GM12878 (cell line): ENCODE measurements at regions of chr7 and their contacts with region 1.

Region 1: GRCh38 chr7:149261829-149262617 is at the start of gene ZNF783:
- DNase-seq: peak; percentile 32
- ATAC-seq: peak; percentile 96
- H3K4me3 ChIP-seq: peak within 1 kb of the TSS; percentile 83
- H3K27ac ChIP-seq: 0 out of 2 replicates have a peak within 1 kb of the TSS, but pooled peaks have one; percentile 6
- H3K4me1 ChIP-seq: peaks cover 6% of the 10 kb centered on the region
- H3K27me3 ChIP-seq: no peaks in the 10 kb centered on the region
- CTCF ChIP-seq: peak; percentile 67 to 90 (median 71); a peak in 5 of 6 replicates
- EP300 ChIP-seq: no peak
- POLR2A ChIP-seq: peak; percentile 79
- RAD21 ChIP-seq: no peak
- polyA plus RNA-seq, gene ZNF783: 2.0 to 2.8 TPM

Region 2: DNA sequence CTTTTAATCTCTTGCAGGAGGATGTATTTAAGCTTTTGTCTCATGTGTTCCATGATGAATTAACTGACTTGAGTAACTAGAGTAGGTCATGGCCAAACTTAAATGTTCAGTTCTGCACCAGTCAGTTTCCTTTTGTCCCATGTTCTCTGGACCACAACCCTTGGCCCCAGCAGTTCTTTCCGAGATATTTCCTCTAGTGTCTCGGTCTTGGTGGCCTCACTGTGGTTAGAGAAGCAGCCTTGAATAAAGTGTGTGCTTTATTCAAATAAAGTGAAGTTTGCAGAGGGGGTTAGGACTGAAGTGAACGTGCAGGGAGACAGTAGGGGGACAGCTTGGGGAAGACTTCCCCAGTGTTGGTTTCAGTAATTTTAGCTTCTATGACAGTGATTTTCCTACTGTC is 13.2 kb before region 1 on chr7:
- CTCF ChIA-PET with region 1: interaction called, 15 read pairs
- POLR2A ChIA-PET with region 1: interaction called, 4 read pairs
- RAD21 ChIA-PET with region 1: interaction called, 3 read pairs
- SMC1A ChIA-PET with region 1: interaction called, 3 read pairs
- in situ Hi-C with region 1: no loop called
- intact Hi-C with region 1: no loop called
- DNase-seq: no peak
- ATAC-seq: peak; percentile 32; the same call in 2 of the 3 replicates
- H3K4me3 ChIP-seq: 0 out of 2 replicates have a peak overlapping the region, but pooled peaks have one; percentile 3
- H3K27ac ChIP-seq: 0 out of 2 replicates have a peak overlapping the region, but pooled peaks have one; percentile 10
- H3K4me1 ChIP-seq: peaks cover 13% of the 10 kb centered on the region
- H3K27me3 ChIP-seq: no peaks in the 10 kb centered on the region
- CTCF ChIP-seq: no peak
- EP300 ChIP-seq: no peak
- POLR2A ChIP-seq: no peak
- RAD21 ChIP-seq: no peak

Region 3: GRCh38 chr7:149284850-149285626 is 23.0 kb after region 1 on chr7:
- CTCF ChIA-PET with region 1: interaction called, 23 read pairs
- POLR2A ChIA-PET with region 1: interaction called, 4 read pairs
- RAD21 ChIA-PET with region 1: interaction called, 12 read pairs
- SMC1A ChIA-PET with region 1: interaction called, 5 read pairs
- in situ Hi-C with region 1: no loop called
- intact Hi-C with region 1: loop called (anchors 2 kb)
- DNase-seq: peak; percentile 68
- ATAC-seq: peak; percentile 99
- H3K4me3 ChIP-seq: peak overlapping the region; percentile 64
- H3K27ac ChIP-seq: peak overlapping the region; percentile 38; the same call in 1 of the 2 replicates
- H3K4me1 ChIP-seq: peaks cover 12% of the 10 kb centered on the region
- H3K27me3 ChIP-seq: no peaks in the 10 kb centered on the region
- CTCF ChIP-seq: peak in 2 of 3 experiments; percentile 16 to 28; a peak in 2 of 6 replicates
- EP300 ChIP-seq: no peak
- POLR2A ChIP-seq: peak; percentile 82
- RAD21 ChIP-seq: no peak

Region 4: GRCh38 chr7:149624419-149625339 is 362.7 kb after region 1 on chr7:
- CTCF ChIA-PET with region 1: interaction called, 7 read pairs
- POLR2A ChIA-PET with region 1: no interaction called
- RAD21 ChIA-PET with region 1: interaction called, 4 read pairs
- SMC1A ChIA-PET with region 1: no interaction called
- in situ Hi-C with region 1: no loop called
- intact Hi-C with region 1: loop called (anchors 2 kb)
- DNase-seq: peak; percentile 50
- ATAC-seq: peak; percentile 92
- H3K4me3 ChIP-seq: peak overlapping the region; percentile 99
- H3K27ac ChIP-seq: peak overlapping the region; percentile 74
- H3K4me1 ChIP-seq: peaks cover 24% of the 10 kb centered on the region
- H3K27me3 ChIP-seq: peaks cover 0 to 3% of the 10 kb centered on the region in 2 experiments; a peak in 2 of 4 replicates
- CTCF ChIP-seq: peak; percentile 78 to 88 (median 84)
- EP300 ChIP-seq: no peak
- POLR2A ChIP-seq: peak; percentile 97
- RAD21 ChIP-seq: peak; percentile 44